ENCODE measurements at regions of chr11 and their contacts with region 1.

Region 1: GRCh38 chr11:63023841-63024648 is 8.4 kb upstream of the SLC22A8 start:
- DNase-seq: peak; percentile 85
- ATAC-seq: peak; percentile 70
- H3K4me3 Mint-ChIP-seq: no peak overlapping the region
- H3K27ac Mint-ChIP-seq: no peak overlapping the region
- H3K4me1 Mint-ChIP-seq: peaks cover 2% of the 10 kb centered on the region
- H3K27me3 Mint-ChIP-seq: peaks cover 23% of the 10 kb centered on the region

Region 2: DNA sequence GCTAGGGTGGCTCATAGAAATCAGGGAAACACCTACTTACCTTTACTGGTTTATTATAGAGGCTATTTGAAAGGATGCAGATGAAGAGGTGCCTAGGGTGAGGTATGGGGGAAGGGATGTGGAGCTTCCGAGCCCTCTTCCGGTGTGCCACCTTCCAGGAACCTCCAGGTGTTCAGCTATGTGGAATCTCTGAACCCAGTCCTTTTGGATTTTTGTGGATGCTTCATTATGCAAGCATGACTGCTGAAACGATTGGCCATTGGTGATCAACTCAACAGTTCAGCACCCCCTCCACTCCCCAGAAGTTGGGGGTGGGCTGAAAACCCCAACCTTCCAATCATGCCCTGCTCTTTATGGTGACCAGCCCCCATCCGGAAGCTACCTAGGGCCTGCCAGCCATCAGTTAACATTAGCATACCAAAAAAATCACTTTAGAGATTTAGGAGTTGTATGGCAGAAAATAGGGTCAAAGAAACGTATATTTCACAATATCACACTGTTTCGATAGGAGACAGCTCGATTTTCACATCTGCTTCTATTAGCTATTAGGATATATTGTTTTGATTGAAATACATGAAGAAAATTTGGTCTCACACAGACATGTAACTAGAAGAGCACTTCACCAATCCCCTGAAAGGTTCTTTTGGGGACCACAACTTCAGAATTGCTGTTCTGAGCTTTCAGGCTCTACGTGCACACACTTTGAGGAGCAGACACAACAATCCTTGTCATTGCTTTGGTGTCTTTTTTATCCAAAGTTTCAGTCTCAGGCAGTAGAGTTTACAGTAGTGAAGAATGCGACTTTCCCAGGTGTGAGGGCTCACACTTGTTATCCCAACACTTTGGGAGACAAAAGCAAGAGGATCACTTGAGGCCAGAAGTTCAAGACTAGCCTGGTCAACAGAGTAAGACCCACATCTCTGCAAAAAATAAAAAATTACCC is 265.9 kb before region 1 on chr11:
- CTCF ChIA-PET with region 1: no interaction called
- DNase-seq: no peak
- ATAC-seq: no peak
- H3K4me3 Mint-ChIP-seq: no peak overlapping the region
- H3K27ac Mint-ChIP-seq: no peak overlapping the region
- H3K4me1 Mint-ChIP-seq: peaks cover 27% of the 10 kb centered on the region
- H3K27me3 Mint-ChIP-seq: no peaks in the 10 kb centered on the region

Region 3: GRCh38 chr11:62880803-62881578 is 143.1 kb before region 1 on chr11 and contains the start of gene SLC3A2:
- CTCF ChIA-PET with region 1: no interaction called
- DNase-seq: peak; percentile 94
- ATAC-seq: peak; percentile 85
- H3K4me3 Mint-ChIP-seq: peak within 1 kb of the TSS; percentile 96
- H3K27ac Mint-ChIP-seq: peak within 1 kb of the TSS; percentile 100
- H3K4me1 Mint-ChIP-seq: peaks cover 45% of the 10 kb centered on the region
- H3K27me3 Mint-ChIP-seq: no peaks in the 10 kb centered on the region
- total RNA-seq, gene SLC3A2: 213 to 259 TPM

Region 4: GRCh38 chr11:63007920-63008319 is 16.1 kb before region 1 on chr11:
- CTCF ChIA-PET with region 1: interaction called, 21 read pairs
- DNase-seq: no peak
- ATAC-seq: no peak
- H3K4me3 Mint-ChIP-seq: no peak overlapping the region
- H3K27ac Mint-ChIP-seq: no peak overlapping the region
- H3K4me1 Mint-ChIP-seq: no peaks in the 10 kb centered on the region
- H3K27me3 Mint-ChIP-seq: peaks cover 7% of the 10 kb centered on the region